ENCODE measurements at regions of chr12 and their contacts with region 1.

Region 1: GRCh38 chr12:6647083-6647604 is at the start of gene ACRBP:
- DNase-seq: peak; percentile 80 to 91 (median 87)
- ATAC-seq: peak; percentile 77 to 97 (median 92)
- H3K4me3 ChIP-seq: peak within 1 kb of the TSS; percentile 3 to 65 (median 56)
- H3K27ac ChIP-seq: peak within 1 kb of the TSS in 11 of 12 donors; percentile 19 to 81 (median 62)
- H3K4me1 ChIP-seq: peaks cover 0 to 43% (median 2%) of the 10 kb centered on the region in 12 donors
- H3K27me3 ChIP-seq: no peaks in the 10 kb centered on the region
- CTCF ChIP-seq: no peak
- POLR2A ChIP-seq: peak in 1 of 2 donors; percentile 37
- total RNA-seq, gene ACRBP: 0.32 to 7.2 (median 0.99) TPM in 8 of 9 donors, not detected in the other

Region 2: DNA sequence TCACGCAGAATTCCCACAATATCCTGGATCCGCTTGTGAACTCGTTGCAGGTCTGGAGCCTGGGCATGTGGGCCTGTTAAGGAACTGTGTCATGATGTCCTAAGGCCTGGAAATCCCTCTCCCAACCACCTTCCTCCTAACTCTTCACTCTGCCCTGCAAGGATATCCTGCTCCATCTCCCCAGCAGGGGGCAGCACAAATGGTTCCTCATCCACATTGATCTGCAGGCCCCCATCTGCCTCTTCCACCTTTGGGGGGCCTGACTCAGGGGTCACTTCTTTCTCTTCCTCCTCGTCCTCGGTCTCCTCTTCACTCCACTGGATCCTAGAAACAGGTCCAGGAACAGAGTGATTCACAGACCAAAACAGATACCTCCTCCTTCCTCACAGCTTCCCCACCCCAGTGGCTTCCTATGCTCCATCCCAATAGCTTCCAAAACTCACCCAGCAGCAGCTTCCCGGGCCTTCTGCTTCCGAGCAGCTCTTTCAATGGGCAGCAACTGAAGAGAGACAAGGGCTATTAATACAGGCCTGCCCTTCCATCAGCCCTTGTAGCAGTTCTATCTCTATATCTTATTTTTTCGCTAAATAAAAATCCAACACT is 83.6 kb before region 1 on chr12:
- intact Hi-C with region 1: loop called in 1 of 10 experiments (anchors 10 kb)
- DNase-seq: peak in 4 of 5 donors; percentile 47 to 54 (median 48)
- ATAC-seq: no peak
- H3K4me3 ChIP-seq: no peak overlapping the region
- H3K27ac ChIP-seq: no peak overlapping the region
- H3K4me1 ChIP-seq: peaks cover 0 to 16% (median 11%) of the 10 kb centered on the region in 12 donors
- H3K27me3 ChIP-seq: no peaks in the 10 kb centered on the region
- CTCF ChIP-seq: peak; percentile 51 to 83 (median 74)
- POLR2A ChIP-seq: no peak

Region 3: DNA sequence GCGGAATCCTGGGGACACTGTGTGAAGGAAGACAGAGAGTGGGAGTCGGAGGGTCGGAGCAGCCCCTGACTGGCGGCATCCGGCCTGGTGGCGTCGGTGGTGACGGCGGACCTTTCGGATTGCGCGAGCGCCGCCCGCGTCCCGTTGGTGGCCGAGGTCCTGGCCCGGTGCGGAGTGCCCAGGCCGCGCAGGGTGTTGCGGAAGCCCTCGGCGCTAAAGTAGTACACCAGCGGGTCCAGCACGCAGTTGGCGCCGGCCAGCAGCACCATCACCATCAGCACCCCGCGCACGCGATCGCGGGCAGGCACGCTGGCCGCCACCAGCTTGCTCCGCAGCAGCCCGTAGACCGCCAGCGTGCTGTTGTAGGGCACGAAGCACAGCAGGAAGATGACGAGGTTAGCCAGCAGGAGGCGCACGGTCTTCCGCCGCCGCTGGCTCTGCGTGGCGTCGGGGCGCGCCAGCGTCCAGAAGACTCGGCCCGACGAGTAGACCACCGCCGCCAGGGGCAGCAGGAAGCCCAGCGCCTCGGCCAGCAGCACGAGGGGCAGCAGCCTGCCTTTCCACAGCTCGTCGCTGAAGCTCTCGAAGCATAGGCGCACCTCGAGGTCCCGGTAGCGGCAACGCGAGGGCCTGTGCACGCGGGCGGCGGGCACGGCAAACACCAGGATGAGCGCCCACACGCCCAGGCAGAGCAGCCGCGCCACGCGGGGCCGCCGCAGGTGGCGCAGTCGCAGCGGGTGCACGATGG is 26.8 kb before region 1 on chr12:
- intact Hi-C with region 1: loop called in 3 of 10 experiments (anchors 2 to 5 kb)
- DNase-seq: peak in 3 of 5 donors; percentile 51 to 87 (median 53)
- ATAC-seq: peak in 3 of 4 donors; percentile 22 to 48 (median 45)
- H3K4me3 ChIP-seq: peak overlapping the region in 10 of 12 donors; percentile 3 to 43 (median 28)
- H3K27ac ChIP-seq: no peak overlapping the region
- H3K4me1 ChIP-seq: peaks cover 0 to 40% (median 0%) of the 10 kb centered on the region in 12 donors
- H3K27me3 ChIP-seq: peaks cover 0 to 15% (median 0%) of the 10 kb centered on the region in 9 donors
- CTCF ChIP-seq: peak; percentile 29 to 68 (median 50)
- POLR2A ChIP-seq: no peak

Region 4: GRCh38 chr12:6965026-6965661 is 318.0 kb after region 1 on chr12:
- intact Hi-C with region 1: no loop called
- DNase-seq: peak; percentile 89 to 92 (median 90)
- ATAC-seq: peak; percentile 68 to 79 (median 72)
- H3K4me3 ChIP-seq: no peak overlapping the region
- H3K27ac ChIP-seq: peak overlapping the region; percentile 18 to 81 (median 66)
- H3K4me1 ChIP-seq: peaks cover 6 to 56% (median 43%) of the 10 kb centered on the region in 12 donors
- H3K27me3 ChIP-seq: no peaks in the 10 kb centered on the region
- CTCF ChIP-seq: peak; percentile 87 to 96 (median 92)
- POLR2A ChIP-seq: no peak

Measured in heart left ventricle (tissue), 16 donors.